OCI-LY7 (cell line): ENCODE measurements at regions of chr6 and their contacts with region 1.

Region 1: GRCh38 chr6:125346201-125346925 is 44.6 kb upstream of the HDDC2 start:
- DNase-seq: peak; percentile 74
- H3K4me3 ChIP-seq: peak overlapping the region; percentile 60
- H3K27ac ChIP-seq: peak overlapping the region; percentile 78
- H3K4me1 ChIP-seq: peaks cover 26% of the 10 kb centered on the region
- CTCF ChIP-seq: no peak

Region 2: DNA sequence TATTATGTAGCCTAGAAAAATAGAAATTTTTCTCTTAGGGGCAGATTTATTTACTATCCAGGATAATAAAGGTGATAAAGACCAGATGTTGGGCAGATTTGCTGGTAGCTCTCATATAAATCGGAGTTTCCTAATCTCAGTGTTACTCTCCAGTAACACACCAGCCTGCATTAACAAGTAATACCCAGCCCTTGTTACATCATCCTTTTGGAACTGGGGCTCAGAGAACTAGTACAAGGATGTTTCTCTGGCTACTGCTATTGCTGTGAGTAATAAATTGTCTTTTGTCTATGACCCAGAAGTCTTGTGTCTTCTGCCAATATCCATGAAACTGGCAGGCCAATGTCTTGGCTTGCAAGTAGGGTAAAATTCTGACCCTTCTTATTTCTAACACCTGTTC is 176.0 kb before region 1 on chr6:
- CTCF ChIA-PET with region 1: no interaction called
- POLR2A ChIA-PET with region 1: no interaction called
- intact Hi-C with region 1: no loop called
- DNase-seq: no peak
- H3K4me3 ChIP-seq: no peak overlapping the region
- H3K27ac ChIP-seq: no peak overlapping the region
- H3K4me1 ChIP-seq: no peaks in the 10 kb centered on the region
- CTCF ChIP-seq: no peak

Region 3: DNA sequence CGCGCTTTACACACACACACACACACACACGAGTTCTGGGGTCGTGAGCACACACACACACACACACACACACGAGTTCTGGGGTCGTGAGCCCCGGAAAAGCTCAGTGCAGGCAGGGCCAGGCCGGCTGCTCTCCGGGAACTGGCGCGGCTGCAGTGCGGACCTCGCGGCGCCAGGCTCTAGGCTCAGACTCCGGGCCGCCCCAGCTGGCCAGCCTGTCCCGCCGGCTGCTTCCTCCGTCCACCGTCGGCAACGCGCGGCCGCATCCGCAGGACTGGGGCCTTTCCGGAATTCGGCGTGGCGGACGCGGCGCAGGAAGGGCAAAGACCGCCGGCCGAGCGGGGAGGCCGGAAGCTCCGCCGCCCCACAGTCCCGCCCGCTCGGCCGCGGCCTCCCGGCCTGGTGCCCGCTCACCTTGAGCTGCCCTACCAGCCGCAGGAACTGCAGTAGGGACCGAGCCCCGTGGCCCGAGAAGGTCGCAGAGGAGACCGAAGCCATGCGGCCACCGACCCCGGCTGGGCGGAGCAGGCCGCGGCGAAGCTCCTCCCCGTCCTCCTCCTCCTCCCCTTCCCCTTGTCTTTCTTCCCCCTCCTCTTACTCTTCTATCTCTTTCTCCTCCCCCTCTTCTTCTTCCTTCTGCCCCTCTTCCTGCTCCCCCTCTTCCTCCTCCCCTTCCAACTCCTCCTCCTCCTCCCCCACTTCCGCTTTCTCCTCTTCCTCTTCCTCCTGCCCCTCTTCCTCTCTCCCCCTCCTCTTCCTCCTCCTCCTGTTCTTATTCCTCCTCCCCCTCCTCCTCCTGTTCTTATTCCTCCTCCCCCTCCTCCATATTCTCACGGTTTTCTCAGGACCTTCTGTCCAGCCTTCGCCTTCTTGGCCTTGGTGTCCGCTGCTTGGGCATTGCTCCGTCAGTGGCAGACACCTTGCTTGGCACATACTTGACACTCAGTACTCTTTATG is 44.6 kb before region 1 on chr6 and contains the start of gene HDDC2:
- CTCF ChIA-PET with region 1: no interaction called
- POLR2A ChIA-PET with region 1: interaction called, 6 read pairs
- intact Hi-C with region 1: loop called (anchors 2 kb)
- DNase-seq: peak; percentile 71
- H3K4me3 ChIP-seq: peak within 1 kb of the TSS; percentile 83
- H3K27ac ChIP-seq: peak within 1 kb of the TSS; percentile 52
- H3K4me1 ChIP-seq: peaks cover 29% of the 10 kb centered on the region
- CTCF ChIP-seq: no peak
- total RNA-seq, gene HDDC2: 75.1 and 88.6 TPM in 2 replicates

Region 4: DNA sequence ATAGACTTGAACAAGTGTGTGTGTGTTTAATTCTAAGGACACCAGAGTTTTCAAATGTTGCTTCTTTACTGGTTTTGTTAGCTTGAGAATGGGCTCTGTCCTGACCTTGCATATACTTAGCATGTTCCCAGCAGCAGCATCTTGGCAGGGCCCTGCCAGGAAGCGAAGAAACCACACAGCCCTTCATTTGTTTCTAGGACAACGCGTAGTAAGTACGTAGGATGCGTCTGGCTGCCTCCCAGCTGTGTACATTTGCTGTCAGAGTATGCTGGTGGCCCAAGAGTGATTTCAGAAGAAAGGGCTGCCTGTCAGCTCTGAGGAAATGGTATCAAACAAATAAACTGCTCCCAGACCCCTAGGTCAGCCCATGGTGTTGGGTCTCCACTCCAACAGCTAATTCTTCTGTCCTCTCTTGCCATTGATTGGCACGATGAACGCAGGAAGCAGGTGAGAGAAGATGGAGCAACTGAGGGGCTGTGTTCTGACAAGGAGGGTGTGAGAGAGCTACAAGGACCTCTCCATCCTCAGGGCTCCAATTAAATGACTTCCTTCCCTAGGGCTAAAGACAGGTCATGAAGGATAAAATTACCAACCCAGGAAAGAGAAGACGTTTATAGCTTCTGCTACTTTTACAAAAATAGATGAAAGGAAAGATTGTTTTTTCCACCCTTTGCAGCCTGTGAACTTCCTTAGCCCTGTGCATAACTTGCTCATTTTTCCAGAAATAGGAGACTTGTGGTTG is 11.3 kb after region 1 on chr6:
- CTCF ChIA-PET with region 1: interaction called, 3 read pairs
- POLR2A ChIA-PET with region 1: interaction called, 23 read pairs
- intact Hi-C with region 1: no loop called
- DNase-seq: no peak
- H3K4me3 ChIP-seq: no peak overlapping the region
- H3K27ac ChIP-seq: no peak overlapping the region
- H3K4me1 ChIP-seq: peaks cover 14% of the 10 kb centered on the region
- CTCF ChIP-seq: no peak